ENCODE measurements at regions of chr1 and their contacts with region 1.

Region 1: GRCh38 chr1:36285448-36286101 is 20.6 kb upstream of the SH3D21 start:
- DNase-seq: peak; percentile 67 to 91 (median 74)
- H3K4me3 ChIP-seq: no peak overlapping the region
- H3K27ac ChIP-seq: peak overlapping the region in 1 of 5 donors; percentile 32
- H3K4me1 ChIP-seq: peaks cover 6 to 40% of the 10 kb centered on the region in 2 donors
- H3K27me3 ChIP-seq: no peaks in the 10 kb centered on the region
- CTCF ChIP-seq: peak; percentile 57 to 82 (median 78)
- POLR2A ChIP-seq: no peak

Region 2: DNA sequence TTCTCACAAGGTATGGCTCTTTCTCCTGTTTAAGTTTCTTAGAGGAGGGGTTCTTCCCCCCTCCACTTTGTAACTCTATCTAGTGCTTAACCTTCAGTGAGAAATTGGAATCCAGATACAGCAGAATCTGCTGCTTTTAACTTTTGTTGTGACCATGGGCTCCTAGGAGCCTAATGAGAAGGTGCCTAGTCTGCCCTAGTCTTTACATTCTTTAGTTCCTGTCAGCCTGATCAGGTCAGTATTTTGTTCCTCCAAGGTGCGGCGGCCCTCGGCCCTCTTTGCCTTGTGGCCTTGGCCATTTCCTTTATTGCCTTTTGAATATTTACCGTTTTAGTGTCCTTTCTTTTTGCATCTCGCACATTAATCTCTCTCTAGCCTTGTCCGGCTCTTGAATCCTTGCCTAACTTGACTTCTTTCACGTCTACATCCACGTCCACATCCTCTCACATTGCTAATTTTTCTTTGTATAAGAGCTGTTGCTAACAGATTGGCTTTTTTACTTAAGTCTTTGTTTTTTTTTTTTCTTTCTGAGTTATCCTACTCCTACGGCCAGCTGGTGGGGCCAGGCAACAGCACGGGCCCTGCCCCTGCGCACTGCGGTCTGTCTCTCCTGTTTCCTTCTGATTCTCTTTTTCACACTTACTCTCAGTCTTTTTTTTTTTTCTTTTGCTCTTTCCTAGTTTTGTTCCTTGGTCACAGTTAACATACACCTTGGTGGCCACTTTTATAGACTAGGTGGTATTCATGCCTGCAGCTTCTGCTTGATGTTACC is 1141.7 kb before region 1 on chr1:
- intact Hi-C with region 1: no loop called
- DNase-seq: no peak
- H3K4me3 ChIP-seq: no peak overlapping the region
- H3K27ac ChIP-seq: no peak overlapping the region
- H3K4me1 ChIP-seq: peaks cover 0 to 3% of the 10 kb centered on the region in 2 donors
- H3K27me3 ChIP-seq: no peaks in the 10 kb centered on the region
- CTCF ChIP-seq: no peak
- POLR2A ChIP-seq: no peak

Region 3: DNA sequence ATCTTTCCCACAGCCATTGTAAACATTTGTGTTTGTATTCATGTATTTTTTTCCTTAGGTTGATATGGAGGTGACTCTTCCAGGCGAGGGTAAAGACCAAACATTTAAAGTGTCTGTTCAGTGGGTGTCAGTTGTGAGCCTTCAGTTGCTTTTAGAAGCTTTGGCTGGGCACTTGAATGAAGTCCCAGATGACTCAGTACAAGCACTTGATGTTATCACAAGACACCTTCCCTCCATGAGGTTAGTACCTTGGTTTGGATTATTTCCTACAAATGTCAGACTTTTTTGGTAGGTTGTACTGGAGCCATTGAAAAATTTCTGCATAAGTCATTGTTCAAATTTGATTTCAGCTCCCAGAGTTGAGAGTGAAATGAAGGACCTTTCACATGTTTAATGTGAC is 460.3 kb before region 1 on chr1:
- intact Hi-C with region 1: no loop called
- DNase-seq: no peak
- H3K4me3 ChIP-seq: no peak overlapping the region
- H3K27ac ChIP-seq: no peak overlapping the region
- H3K4me1 ChIP-seq: peaks cover 0 to 5% of the 10 kb centered on the region in 2 donors
- H3K27me3 ChIP-seq: no peaks in the 10 kb centered on the region
- CTCF ChIP-seq: no peak
- POLR2A ChIP-seq: no peak

Region 4: GRCh38 chr1:36099681-36100341 is 185.8 kb before region 1 on chr1:
- intact Hi-C with region 1: loop called (anchors 5 to 10 kb)
- DNase-seq: peak; percentile 79 to 90 (median 84)
- H3K4me3 ChIP-seq: no peak overlapping the region
- H3K27ac ChIP-seq: no peak overlapping the region
- H3K4me1 ChIP-seq: peaks cover 2 to 32% of the 10 kb centered on the region in 2 donors
- H3K27me3 ChIP-seq: no peaks in the 10 kb centered on the region
- CTCF ChIP-seq: peak; percentile 52 to 95 (median 85)
- POLR2A ChIP-seq: no peak

Region 5: DNA sequence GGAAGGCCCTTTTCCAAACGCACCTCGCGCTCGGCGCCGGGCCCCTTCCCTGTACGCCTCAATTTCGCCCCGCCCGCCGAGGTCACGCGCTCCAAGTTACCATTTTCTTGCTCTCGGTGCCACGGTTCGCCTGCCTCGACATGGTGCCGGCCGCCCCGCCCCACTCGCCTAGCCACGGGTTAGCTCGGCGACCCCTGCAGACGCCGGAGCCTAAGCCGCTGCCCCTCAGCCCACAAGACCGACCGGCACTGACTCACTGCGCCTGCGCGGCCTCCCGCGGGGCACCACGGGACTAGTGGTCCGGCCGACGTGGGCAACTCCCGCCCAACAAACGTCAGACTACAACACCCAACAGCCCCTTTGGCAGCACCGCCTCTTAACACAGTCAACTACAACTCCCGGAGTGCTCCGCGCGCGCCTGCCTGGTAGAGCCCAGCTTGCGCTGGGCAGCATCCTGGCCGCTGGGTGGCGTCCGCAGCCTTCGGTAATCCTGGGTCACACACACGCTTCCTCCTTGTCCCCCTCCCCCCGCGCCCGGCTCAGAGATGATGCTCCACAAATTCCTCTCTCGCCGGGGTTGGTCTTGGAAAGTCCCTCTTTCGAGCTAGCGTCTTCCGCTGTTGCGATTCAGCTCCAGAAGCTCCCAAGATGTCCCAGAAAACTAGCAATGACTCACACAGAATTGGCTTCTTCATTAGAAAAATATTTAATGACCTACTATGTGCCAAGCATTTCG is 136.2 kb before region 1 on chr1 and contains the start of gene TRAPPC3:
- intact Hi-C with region 1: loop called (anchors 5 kb)
- DNase-seq: peak; percentile 100
- H3K4me3 ChIP-seq: peak within 1 kb of the TSS; percentile 59 to 96 (median 76)
- H3K27ac ChIP-seq: peak within 1 kb of the TSS; percentile 74 to 97 (median 96)
- H3K4me1 ChIP-seq: peaks cover 27 to 45% of the 10 kb centered on the region in 2 donors
- H3K27me3 ChIP-seq: no peaks in the 10 kb centered on the region
- CTCF ChIP-seq: peak; percentile 75 to 99 (median 98)
- POLR2A ChIP-seq: peak; percentile 63 to 77
- total RNA-seq, gene TRAPPC3: 74.6 to 182 (median 124) TPM

Region 6: DNA sequence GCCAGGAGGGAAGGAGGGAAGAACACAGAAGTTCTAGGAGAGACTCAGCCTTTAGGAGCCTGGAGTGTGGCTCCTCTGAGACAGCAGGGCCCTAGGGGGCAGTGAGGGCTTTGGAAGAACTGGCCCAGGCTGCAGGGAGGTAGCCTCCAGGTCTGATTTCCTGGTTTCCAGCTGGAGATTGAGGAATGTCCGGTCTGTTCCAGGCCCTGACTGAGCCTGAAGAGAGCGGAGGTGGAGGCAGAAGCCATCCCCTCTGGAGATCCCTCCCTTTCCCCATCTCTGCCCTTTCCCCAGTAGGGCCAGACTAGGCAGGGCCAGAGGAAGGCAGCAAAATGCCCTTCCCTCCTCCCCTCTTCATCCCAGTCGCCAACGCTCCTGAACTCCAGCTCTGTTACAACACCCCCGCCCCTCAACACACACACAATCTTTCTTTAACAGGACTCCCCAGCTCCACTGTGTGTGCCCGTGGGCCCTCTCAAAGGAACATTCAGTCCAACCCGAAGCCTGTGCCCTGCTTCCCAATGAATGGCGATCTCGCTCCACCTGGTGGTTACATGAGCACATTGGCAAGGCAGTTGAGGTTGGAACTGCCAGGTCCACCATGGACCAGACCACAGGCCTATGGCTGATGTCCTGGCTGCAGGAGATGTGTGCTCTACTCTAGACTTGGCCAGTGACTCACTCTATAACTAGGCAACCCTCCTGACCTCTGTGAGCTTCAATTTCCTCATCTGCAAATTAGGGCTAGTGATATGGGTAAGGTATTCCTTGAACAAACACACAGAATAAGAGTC is 97.6 kb before region 1 on chr1:
- intact Hi-C with region 1: loop called in 1 of 2 experiments (anchors 10 kb)
- DNase-seq: peak; percentile 84 to 96 (median 91)
- H3K4me3 ChIP-seq: no peak overlapping the region
- H3K27ac ChIP-seq: peak overlapping the region in 4 of 5 donors; percentile 33 to 83 (median 73)
- H3K4me1 ChIP-seq: peaks cover 6 to 10% of the 10 kb centered on the region in 2 donors
- H3K27me3 ChIP-seq: no peaks in the 10 kb centered on the region
- CTCF ChIP-seq: peak; percentile 83 to 99 (median 96)
- POLR2A ChIP-seq: peak in 1 of 2 donors; percentile 20

Region 7: GRCh38 chr1:36223993-36224536 is 61.5 kb before region 1 on chr1 and contains the start of gene THRAP3:
- intact Hi-C with region 1: loop called (anchors 10 kb)
- DNase-seq: peak; percentile 99 to 100 (median 100)
- H3K4me3 ChIP-seq: peak within 1 kb of the TSS; percentile 71 to 99 (median 80)
- H3K27ac ChIP-seq: peak within 1 kb of the TSS; percentile 88 to 99 (median 96)
- H3K4me1 ChIP-seq: peaks cover 33 to 38% of the 10 kb centered on the region in 2 donors
- H3K27me3 ChIP-seq: no peaks in the 10 kb centered on the region
- CTCF ChIP-seq: no peak
- POLR2A ChIP-seq: peak; percentile 98
- total RNA-seq, gene THRAP3: 68.1 to 120 (median 84.5) TPM

Region 8: GRCh38 chr1:36528361-36529349 is 243.1 kb after region 1 on chr1:
- intact Hi-C with region 1: no loop called
- DNase-seq: no peak
- H3K4me3 ChIP-seq: no peak overlapping the region
- H3K27ac ChIP-seq: no peak overlapping the region
- H3K4me1 ChIP-seq: no peaks in the 10 kb centered on the region
- H3K27me3 ChIP-seq: no peaks in the 10 kb centered on the region
- CTCF ChIP-seq: no peak
- POLR2A ChIP-seq: no peak

Measured in adrenal gland (tissue), 19 donors.